ENCODE measurements at regions of chr16 and their contacts with region 1.

Region 1: GRCh38 chr16:19375561-19376158 is 42.0 kb upstream of the TMC5 start:
- DNase-seq: peak in 3 of 9 donors; percentile 4 to 29 (median 9)
- ATAC-seq: peak; percentile 45
- H3K4me3 ChIP-seq: no peak overlapping the region
- H3K4me3 Mint-ChIP-seq: no peak overlapping the region
- H3K27ac ChIP-seq: no peak overlapping the region
- H3K27ac Mint-ChIP-seq: no peak overlapping the region
- H3K4me1 ChIP-seq: no peaks in the 10 kb centered on the region
- H3K4me1 Mint-ChIP-seq: peaks cover 0 to 12% (median 0%) of the 10 kb centered on the region in 7 donors
- H3K27me3 ChIP-seq: no peaks in the 10 kb centered on the region
- H3K27me3 Mint-ChIP-seq: peaks cover 0 to 6% (median 3%) of the 10 kb centered on the region in 5 donors

Region 2: DNA sequence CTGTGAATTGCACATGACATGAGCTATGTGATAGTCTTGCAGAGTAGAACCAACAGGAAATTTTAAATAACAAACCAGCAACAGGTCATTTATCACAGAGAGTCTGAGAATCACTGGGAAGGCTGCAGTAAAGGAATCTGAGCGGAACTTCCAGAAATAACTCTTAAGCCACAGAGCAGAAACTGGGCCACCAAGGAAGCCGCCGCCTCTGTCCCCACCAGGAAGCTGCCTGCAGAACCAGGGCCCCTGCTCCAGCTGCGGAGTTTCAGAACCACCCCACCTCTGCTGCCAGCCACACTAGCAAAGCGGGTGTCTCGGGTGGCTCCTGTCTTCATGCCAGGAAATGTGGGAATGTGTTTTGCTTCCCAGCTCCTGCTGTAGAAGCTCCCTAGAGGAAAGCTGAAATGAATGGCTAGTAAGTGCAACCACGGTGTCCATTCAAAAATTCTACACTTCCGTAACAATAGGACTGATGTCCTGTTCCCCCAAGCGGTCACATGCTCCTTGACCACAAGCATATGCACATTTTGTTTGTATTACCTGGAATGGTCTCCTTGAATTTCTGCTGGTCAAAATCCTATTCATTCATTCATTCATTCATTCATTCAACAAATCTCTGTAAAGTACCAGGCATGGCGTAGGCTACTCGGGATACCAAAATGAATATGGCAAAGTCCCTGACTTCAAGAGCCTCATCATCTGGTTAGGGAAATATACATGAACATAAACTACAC is 269.6 kb before region 1 on chr16:
- CTCF ChIA-PET with region 1: no interaction called
- POLR2A ChIA-PET with region 1: no interaction called
- intact Hi-C with region 1: no loop called
- DNase-seq: no peak
- ATAC-seq: no peak
- H3K4me3 ChIP-seq: no peak overlapping the region
- H3K4me3 Mint-ChIP-seq: no peak overlapping the region
- H3K27ac ChIP-seq: no peak overlapping the region
- H3K27ac Mint-ChIP-seq: no peak overlapping the region
- H3K4me1 ChIP-seq: no peaks in the 10 kb centered on the region
- H3K4me1 Mint-ChIP-seq: peaks cover 0 to 10% (median 0%) of the 10 kb centered on the region in 7 donors
- H3K27me3 ChIP-seq: no peaks in the 10 kb centered on the region
- H3K27me3 Mint-ChIP-seq: peaks cover 0 to 20% (median 10%) of the 10 kb centered on the region in 5 donors

Region 3: DNA sequence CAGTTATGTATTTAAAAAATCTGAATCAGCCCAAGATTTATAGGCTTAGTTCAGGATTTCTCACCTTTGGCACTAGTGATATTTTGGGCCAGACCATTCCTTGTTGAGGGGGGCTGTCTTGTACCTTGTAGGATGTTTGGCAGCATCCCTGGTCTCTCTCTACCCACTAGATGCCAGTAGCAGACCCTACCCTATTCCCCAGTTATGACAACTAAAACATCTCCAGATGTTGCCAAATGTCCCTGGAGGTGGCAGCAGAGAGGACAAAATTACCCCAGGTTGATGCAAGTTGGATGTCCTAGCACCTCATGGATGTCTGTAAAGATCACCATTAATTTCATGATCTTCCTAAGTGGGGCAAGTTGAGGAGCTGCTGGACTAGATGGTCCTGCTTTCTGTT is 161.8 kb before region 1 on chr16:
- CTCF ChIA-PET with region 1: no interaction called
- POLR2A ChIA-PET with region 1: no interaction called
- intact Hi-C with region 1: loop called in 1 of 2 experiments (anchors 2 kb)
- DNase-seq: no peak
- ATAC-seq: no peak
- H3K4me3 ChIP-seq: no peak overlapping the region
- H3K4me3 Mint-ChIP-seq: no peak overlapping the region
- H3K27ac ChIP-seq: no peak overlapping the region
- H3K27ac Mint-ChIP-seq: no peak overlapping the region
- H3K4me1 ChIP-seq: no peaks in the 10 kb centered on the region
- H3K4me1 Mint-ChIP-seq: peaks cover 0 to 2% (median 0%) of the 10 kb centered on the region in 7 donors
- H3K27me3 ChIP-seq: no peaks in the 10 kb centered on the region
- H3K27me3 Mint-ChIP-seq: peaks cover 0 to 6% (median 4%) of the 10 kb centered on the region in 5 donors

Region 4: GRCh38 chr16:19245326-19245925 is 130.2 kb before region 1 on chr16:
- CTCF ChIA-PET with region 1: no interaction called
- POLR2A ChIA-PET with region 1: no interaction called
- intact Hi-C with region 1: no loop called
- DNase-seq: no peak
- ATAC-seq: no peak
- H3K4me3 ChIP-seq: no peak overlapping the region
- H3K4me3 Mint-ChIP-seq: no peak overlapping the region
- H3K27ac ChIP-seq: no peak overlapping the region
- H3K27ac Mint-ChIP-seq: no peak overlapping the region
- H3K4me1 ChIP-seq: no peaks in the 10 kb centered on the region
- H3K4me1 Mint-ChIP-seq: no peaks in the 10 kb centered on the region
- H3K27me3 ChIP-seq: no peaks in the 10 kb centered on the region
- H3K27me3 Mint-ChIP-seq: peaks cover 0 to 7% (median 0%) of the 10 kb centered on the region in 5 donors

Measured in naive thymus-derived CD4-positive, alpha-beta T cell (primary cell).